CD14-positive monocyte (primary cell): ENCODE measurements at regions of chr18 and their contacts with region 1.

Region 1: DNA sequence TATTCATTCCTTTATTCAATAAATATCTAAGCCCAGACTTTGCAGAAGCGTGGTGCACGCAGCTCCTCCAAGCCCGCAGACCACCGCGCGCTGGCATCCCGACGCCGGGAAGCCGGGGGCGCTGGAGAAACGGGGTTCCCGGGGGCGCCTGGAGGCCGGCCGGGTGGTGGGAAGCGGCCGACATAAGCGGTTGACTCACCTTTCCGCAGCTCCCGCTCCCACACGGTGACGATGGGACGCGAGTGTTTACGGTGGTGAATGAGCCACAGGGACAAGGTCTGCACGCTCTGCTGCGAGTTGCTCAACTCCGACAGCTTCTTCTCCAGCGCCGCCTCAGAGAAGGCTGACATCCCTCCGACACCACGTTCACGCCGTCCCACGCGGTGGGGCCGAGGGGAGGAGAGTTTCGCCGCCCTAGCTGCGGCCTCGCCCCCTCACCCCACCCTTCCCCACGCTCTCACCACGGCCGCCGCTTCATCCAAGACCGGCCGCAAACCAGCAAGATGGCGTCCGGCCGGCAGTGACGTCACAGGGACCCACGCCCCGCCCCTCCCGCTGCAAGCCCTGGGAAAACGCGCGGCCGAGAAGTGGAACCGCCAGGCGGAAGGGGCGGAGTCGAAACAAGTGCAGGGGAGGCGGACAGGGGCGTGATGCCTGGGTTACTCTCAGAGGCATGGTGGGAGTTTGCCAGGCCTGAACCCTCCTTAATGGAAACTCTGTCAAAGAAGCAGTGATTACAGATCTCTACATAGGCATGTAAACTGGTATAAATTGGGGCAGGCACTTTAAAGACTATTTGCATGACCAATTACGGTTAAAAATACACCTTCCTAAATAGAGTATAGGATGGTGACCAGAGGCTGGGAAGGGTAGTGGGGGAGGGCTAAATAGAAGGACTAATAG is at the start of gene RPRD1A:
- DNase-seq: peak; percentile 93 to 97 (median 96)
- H3K4me3 ChIP-seq: peak within 1 kb of the TSS; percentile 84 to 86 (median 86)
- H3K4me3 Mint-ChIP-seq: peak within 1 kb of the TSS; percentile 88 to 95
- H3K27ac ChIP-seq: peak within 1 kb of the TSS; percentile 96 to 98
- H3K27ac Mint-ChIP-seq: peak within 1 kb of the TSS; percentile 93 to 98 (median 97)
- H3K4me1 ChIP-seq: peaks cover 9 to 21% of the 10 kb centered on the region in 2 donors
- H3K4me1 Mint-ChIP-seq: peaks cover 27% of the 10 kb centered on the region
- H3K27me3 ChIP-seq: no peaks in the 10 kb centered on the region
- H3K27me3 Mint-ChIP-seq: peaks cover 5 to 6% (median 5%) of the 10 kb centered on the region in 3 donors
- CTCF ChIP-seq: no peak
- polyA plus RNA-seq, gene RPRD1A: 10.0 to 30.3 (median 10.9) TPM

Region 2: GRCh38 chr18:35343936-35344735 is 723.2 kb before region 1 on chr18 and contains the start of gene ZNF24:
- intact Hi-C with region 1: loop called in 1 of 2 experiments (anchors 10 kb)
- DNase-seq: peak; percentile 91 to 94 (median 93)
- H3K4me3 ChIP-seq: peak within 1 kb of the TSS; percentile 74 to 87 (median 84)
- H3K4me3 Mint-ChIP-seq: peak within 1 kb of the TSS; percentile 91 to 92
- H3K27ac ChIP-seq: peak within 1 kb of the TSS; percentile 96 to 98
- H3K27ac Mint-ChIP-seq: peak within 1 kb of the TSS; percentile 92 to 99 (median 98)
- H3K4me1 ChIP-seq: peaks cover 29 to 37% of the 10 kb centered on the region in 2 donors
- H3K4me1 Mint-ChIP-seq: peaks cover 46% of the 10 kb centered on the region
- H3K27me3 ChIP-seq: no peaks in the 10 kb centered on the region
- H3K27me3 Mint-ChIP-seq: peaks cover 0 to 1% (median 0%) of the 10 kb centered on the region in 3 donors
- CTCF ChIP-seq: no peak
- polyA plus RNA-seq, gene ZNF24: 12.9 to 64.4 (median 54.3) TPM

Region 3: DNA sequence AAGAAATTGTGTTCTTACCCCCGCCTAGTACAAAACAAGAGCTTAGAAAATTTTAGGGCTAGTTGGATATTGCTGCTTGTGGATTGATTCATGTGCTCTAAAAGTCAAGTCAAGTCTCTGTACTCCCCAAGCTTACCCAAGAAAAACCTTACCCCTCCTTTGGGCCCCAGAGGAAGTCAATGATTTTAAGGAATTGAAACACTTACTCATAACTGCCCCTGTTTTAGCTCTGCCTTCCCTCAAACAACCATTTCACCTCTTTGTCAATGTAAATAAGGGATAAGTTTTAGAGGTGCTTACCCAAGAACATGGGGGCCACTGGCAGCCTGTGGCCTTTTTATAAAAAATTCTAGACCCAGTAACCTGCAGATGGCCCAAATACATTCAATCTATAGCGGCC is 231.5 kb before region 1 on chr18:
- intact Hi-C with region 1: loop called in 1 of 2 experiments (anchors 10 kb)
- DNase-seq: peak; percentile 69 to 95 (median 80)
- H3K4me3 ChIP-seq: peak overlapping the region in 1 of 3 experiments; percentile 41
- H3K4me3 Mint-ChIP-seq: peak overlapping the region in 1 of 2 donors; percentile 58
- H3K27ac ChIP-seq: peak overlapping the region in 1 of 2 donors; percentile 73
- H3K27ac Mint-ChIP-seq: peak overlapping the region; percentile 58 to 90 (median 79)
- H3K4me1 ChIP-seq: peaks cover 60 to 75% of the 10 kb centered on the region in 2 donors
- H3K4me1 Mint-ChIP-seq: peaks cover 73% of the 10 kb centered on the region
- H3K27me3 ChIP-seq: no peaks in the 10 kb centered on the region
- H3K27me3 Mint-ChIP-seq: peaks cover 0 to 4% (median 1%) of the 10 kb centered on the region in 3 donors
- CTCF ChIP-seq: no peak

Region 4: GRCh38 chr18:35972197-35973052 is 94.9 kb before region 1 on chr18 and contains the start of gene RMP24:
- intact Hi-C with region 1: loop called (anchors 5 to 10 kb)
- DNase-seq: peak; percentile 91 to 94 (median 92)
- H3K4me3 ChIP-seq: peak within 1 kb of the TSS; percentile 85 to 91 (median 88)
- H3K4me3 Mint-ChIP-seq: peak within 1 kb of the TSS; percentile 98 to 99
- H3K27ac ChIP-seq: peak within 1 kb of the TSS; percentile 77 to 88
- H3K27ac Mint-ChIP-seq: peak within 1 kb of the TSS; percentile 94 to 99 (median 97)
- H3K4me1 ChIP-seq: peaks cover 25 to 41% of the 10 kb centered on the region in 2 donors
- H3K4me1 Mint-ChIP-seq: peaks cover 41% of the 10 kb centered on the region
- H3K27me3 ChIP-seq: no peaks in the 10 kb centered on the region
- H3K27me3 Mint-ChIP-seq: no peaks in the 10 kb centered on the region
- CTCF ChIP-seq: no peak

Region 5: DNA sequence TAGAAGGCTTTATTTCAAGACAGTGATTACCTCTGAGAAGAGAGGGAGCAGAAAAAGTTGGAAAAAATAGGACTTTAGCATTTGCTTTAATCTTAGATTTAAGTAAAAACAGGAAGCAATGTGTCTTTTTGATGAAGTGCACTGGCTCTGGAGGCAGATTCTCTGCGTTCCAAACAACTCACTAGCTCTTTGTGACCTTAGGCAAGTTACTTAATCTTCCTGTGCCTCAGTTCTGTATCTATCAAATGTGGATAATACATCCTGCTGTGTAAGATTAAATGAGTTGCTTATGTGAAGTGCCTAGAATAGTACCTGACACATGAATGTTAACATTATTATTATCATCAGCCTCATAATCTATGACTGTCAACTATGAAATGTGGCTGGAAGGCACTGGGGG is 42.3 kb before region 1 on chr18:
- intact Hi-C with region 1: no loop called
- DNase-seq: no peak
- H3K4me3 ChIP-seq: no peak overlapping the region
- H3K4me3 Mint-ChIP-seq: no peak overlapping the region
- H3K27ac ChIP-seq: no peak overlapping the region
- H3K27ac Mint-ChIP-seq: peak overlapping the region in 1 of 7 donors; percentile 34
- H3K4me1 ChIP-seq: no peaks in the 10 kb centered on the region
- H3K4me1 Mint-ChIP-seq: peaks cover 3% of the 10 kb centered on the region
- H3K27me3 ChIP-seq: no peaks in the 10 kb centered on the region
- H3K27me3 Mint-ChIP-seq: no peaks in the 10 kb centered on the region
- CTCF ChIP-seq: no peak

Region 6: GRCh38 chr18:36129300-36130038 is 62.2 kb after region 1 on chr18 and contains the starts of genes ELP2 and SLC39A6:
- intact Hi-C with region 1: loop called (anchors 1 to 10 kb)
- DNase-seq: peak; percentile 94 to 96 (median 95)
- H3K4me3 ChIP-seq: peak within 1 kb of the TSS; percentile 55 to 98 (median 92)
- H3K4me3 Mint-ChIP-seq: peak within 1 kb of the TSS; percentile 94
- H3K27ac ChIP-seq: peak within 1 kb of the TSS; percentile 91 to 100
- H3K27ac Mint-ChIP-seq: peak within 1 kb of the TSS; percentile 95 to 99 (median 97)
- H3K4me1 ChIP-seq: peaks cover 30 to 33% of the 10 kb centered on the region in 2 donors
- H3K4me1 Mint-ChIP-seq: peaks cover 38% of the 10 kb centered on the region
- H3K27me3 ChIP-seq: no peaks in the 10 kb centered on the region
- H3K27me3 Mint-ChIP-seq: peaks cover 0 to 2% (median 2%) of the 10 kb centered on the region in 3 donors
- CTCF ChIP-seq: no peak
- polyA plus RNA-seq, gene ELP2: 24.8 to 52.5 (median 27.1) TPM
- polyA plus RNA-seq, gene SLC39A6: 13.2 to 20.1 (median 16.8) TPM